ENCODE measurements at regions of chr9 and their contacts with region 1.

Region 1: GRCh38 chr9:20382460-20383071 is 239.7 kb downstream of the MLLT3 start:
- DNase-seq: no peak
- ATAC-seq: no peak
- H3K4me3 ChIP-seq: no peak overlapping the region
- H3K4me3 Mint-ChIP-seq: no peak overlapping the region
- H3K27ac ChIP-seq: no peak overlapping the region
- H3K27ac Mint-ChIP-seq: no peak overlapping the region
- H3K4me1 ChIP-seq: no peaks in the 10 kb centered on the region
- H3K4me1 Mint-ChIP-seq: peaks cover 49% of the 10 kb centered on the region
- H3K27me3 ChIP-seq: no peaks in the 10 kb centered on the region
- H3K27me3 Mint-ChIP-seq: no peaks in the 10 kb centered on the region
- CTCF ChIP-seq: no peak

Region 2: GRCh38 chr9:20447291-20447690 is 64.7 kb after region 1 on chr9:
- CTCF ChIA-PET with region 1: no interaction called
- POLR2A ChIA-PET with region 1: no interaction called
- intact Hi-C with region 1: loop called in 1 of 2 experiments (anchors 5 kb)
- DNase-seq: no peak
- ATAC-seq: no peak
- H3K4me3 ChIP-seq: no peak overlapping the region
- H3K4me3 Mint-ChIP-seq: no peak overlapping the region
- H3K27ac ChIP-seq: no peak overlapping the region
- H3K27ac Mint-ChIP-seq: no peak overlapping the region
- H3K4me1 ChIP-seq: peaks cover under 1% of the 10 kb centered on the region
- H3K4me1 Mint-ChIP-seq: peaks cover 32% of the 10 kb centered on the region
- H3K27me3 ChIP-seq: no peaks in the 10 kb centered on the region
- H3K27me3 Mint-ChIP-seq: no peaks in the 10 kb centered on the region
- CTCF ChIP-seq: no peak

Measured in CD8-positive, alpha-beta T cell (primary cell).